ENCODE measurements at regions of chrX and their contacts with region 1.

Region 1: DNA sequence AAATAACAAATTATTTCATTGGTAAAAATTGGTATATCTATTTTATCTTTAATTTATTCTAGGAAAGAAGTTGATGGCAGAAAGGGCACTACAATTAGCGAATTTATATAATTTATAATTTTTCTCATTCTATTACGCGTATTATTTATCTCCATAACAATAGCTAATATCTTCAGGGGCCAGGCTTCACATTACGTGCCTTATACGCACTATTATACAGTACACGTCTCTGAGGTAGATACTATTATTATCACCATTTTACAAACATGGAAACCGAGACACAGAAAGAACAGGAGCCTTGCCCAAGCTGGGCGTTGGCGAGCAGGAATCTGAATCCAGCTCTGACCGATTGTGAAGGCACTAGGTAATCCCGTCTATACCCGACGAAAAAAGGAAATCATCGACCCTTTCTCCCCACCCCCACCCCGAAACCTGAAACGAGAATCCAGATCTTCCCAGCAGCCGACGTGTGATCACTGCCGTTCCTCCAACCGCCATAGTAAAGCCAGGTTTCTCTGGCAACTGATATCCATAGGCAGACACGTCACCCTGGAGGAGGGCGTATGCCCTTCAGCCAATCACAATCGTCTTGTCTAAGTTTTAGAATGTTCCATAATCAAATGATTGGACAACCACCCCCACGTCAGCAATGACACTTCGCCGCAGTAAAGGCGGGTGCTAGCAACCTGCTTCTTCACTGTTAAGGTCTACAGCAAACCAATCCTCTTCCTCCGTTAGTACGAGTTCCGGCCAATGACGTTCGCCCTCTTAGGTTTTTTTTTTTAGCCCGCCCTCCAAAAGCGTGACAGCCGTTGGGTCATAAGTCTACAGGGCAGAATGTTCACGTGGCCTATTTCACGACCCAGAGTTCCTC is at the start of gene MORF4L2:
- DNase-seq: peak; percentile 97
- H3K4me3 ChIP-seq: peak within 1 kb of the TSS; percentile 55 to 64 (median 62)
- H3K27ac ChIP-seq: peak within 1 kb of the TSS; percentile 91 to 95 (median 94)
- H3K4me1 ChIP-seq: peaks cover 2 to 33% (median 18%) of the 10 kb centered on the region in 4 donors
- H3K27me3 ChIP-seq: no peaks in the 10 kb centered on the region
- CTCF ChIP-seq: no peak
- EP300 ChIP-seq: no peak
- POLR2A ChIP-seq: peak; percentile 73
- total RNA-seq, gene MORF4L2: 299 to 400 (median 353) TPM

Region 2: GRCh38 chrX:103629318-103630170 is 56.9 kb before region 1 on chrX:
- intact Hi-C with region 1: loop called (anchors 5 kb)
- DNase-seq: no peak
- H3K4me3 ChIP-seq: peak overlapping the region; percentile 62 to 75 (median 67)
- H3K27ac ChIP-seq: peak overlapping the region; percentile 90 to 93 (median 92)
- H3K4me1 ChIP-seq: peaks cover 5 to 37% (median 23%) of the 10 kb centered on the region in 4 donors
- H3K27me3 ChIP-seq: no peaks in the 10 kb centered on the region
- CTCF ChIP-seq: peak; percentile 45 to 53 (median 47)
- EP300 ChIP-seq: peak; percentile 54
- POLR2A ChIP-seq: no peak

Region 3: DNA sequence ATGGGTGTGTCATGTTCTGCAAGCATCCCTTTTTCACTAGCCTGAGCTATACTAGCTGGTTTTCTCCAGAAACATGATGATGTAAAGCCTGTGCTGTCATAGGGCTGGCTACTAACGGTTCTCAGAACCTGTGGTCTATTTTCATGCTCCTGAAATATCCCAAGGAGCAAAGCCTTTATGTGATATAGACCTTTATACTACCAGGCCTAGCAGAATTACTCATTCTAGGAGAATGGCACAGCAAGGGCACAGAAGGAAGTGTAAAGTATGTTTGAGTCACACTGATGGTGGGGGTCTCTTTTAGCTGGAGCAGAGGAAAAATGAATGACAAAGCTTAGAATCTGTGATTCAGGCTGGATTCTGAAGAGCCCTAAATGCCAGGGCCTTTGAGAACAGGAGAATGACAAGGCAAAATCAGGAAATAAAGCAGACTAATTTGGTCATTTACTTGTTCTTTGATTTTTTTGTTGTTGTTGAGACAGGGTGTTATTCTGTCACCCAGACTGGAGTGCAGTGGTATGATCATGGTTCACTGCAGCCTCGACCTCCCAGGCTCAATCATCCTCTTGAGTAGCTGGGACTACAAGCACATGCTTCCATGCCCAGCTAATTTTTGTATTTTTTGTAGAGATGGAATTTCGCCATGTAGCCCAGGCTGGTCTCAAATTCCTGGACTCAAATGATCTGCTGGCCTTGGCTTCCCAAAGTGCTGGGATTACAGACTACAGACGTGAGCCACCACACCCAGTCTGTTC is 45.9 kb before region 1 on chrX:
- intact Hi-C with region 1: no loop called
- DNase-seq: no peak
- H3K4me3 ChIP-seq: no peak overlapping the region
- H3K27ac ChIP-seq: no peak overlapping the region
- H3K4me1 ChIP-seq: no peaks in the 10 kb centered on the region
- H3K27me3 ChIP-seq: no peaks in the 10 kb centered on the region
- CTCF ChIP-seq: no peak
- EP300 ChIP-seq: no peak
- POLR2A ChIP-seq: no peak

Region 4: DNA sequence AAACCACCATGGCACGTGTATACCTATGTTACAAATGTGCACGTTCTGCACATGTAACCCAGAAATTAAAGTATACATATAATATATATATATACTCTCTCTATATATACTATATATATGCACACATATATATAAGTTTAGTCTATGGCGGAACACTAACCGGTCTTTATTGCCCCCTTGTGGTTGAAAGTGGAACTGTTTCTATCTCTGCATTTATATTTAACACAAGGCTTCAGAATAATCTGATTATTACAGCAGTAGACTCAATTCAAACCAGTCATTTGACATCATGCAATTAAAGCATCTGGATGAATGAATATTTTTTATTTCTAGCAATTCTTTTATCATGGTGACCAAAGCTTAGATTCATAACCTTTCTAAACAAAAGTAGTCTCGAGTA is 131.1 kb after region 1 on chrX:
- intact Hi-C with region 1: loop called (anchors 5 kb)
- DNase-seq: no peak
- H3K4me3 ChIP-seq: no peak overlapping the region
- H3K27ac ChIP-seq: no peak overlapping the region
- H3K4me1 ChIP-seq: peaks cover 0 to 4% (median 0%) of the 10 kb centered on the region in 4 donors
- H3K27me3 ChIP-seq: no peaks in the 10 kb centered on the region
- CTCF ChIP-seq: peak; percentile 72 to 80 (median 77)
- EP300 ChIP-seq: no peak
- POLR2A ChIP-seq: no peak

Measured in esophagus muscularis mucosa (tissue), 4 donors.